ENCODE measurements at regions of chr5 and their contacts with region 1.

Region 1: DNA sequence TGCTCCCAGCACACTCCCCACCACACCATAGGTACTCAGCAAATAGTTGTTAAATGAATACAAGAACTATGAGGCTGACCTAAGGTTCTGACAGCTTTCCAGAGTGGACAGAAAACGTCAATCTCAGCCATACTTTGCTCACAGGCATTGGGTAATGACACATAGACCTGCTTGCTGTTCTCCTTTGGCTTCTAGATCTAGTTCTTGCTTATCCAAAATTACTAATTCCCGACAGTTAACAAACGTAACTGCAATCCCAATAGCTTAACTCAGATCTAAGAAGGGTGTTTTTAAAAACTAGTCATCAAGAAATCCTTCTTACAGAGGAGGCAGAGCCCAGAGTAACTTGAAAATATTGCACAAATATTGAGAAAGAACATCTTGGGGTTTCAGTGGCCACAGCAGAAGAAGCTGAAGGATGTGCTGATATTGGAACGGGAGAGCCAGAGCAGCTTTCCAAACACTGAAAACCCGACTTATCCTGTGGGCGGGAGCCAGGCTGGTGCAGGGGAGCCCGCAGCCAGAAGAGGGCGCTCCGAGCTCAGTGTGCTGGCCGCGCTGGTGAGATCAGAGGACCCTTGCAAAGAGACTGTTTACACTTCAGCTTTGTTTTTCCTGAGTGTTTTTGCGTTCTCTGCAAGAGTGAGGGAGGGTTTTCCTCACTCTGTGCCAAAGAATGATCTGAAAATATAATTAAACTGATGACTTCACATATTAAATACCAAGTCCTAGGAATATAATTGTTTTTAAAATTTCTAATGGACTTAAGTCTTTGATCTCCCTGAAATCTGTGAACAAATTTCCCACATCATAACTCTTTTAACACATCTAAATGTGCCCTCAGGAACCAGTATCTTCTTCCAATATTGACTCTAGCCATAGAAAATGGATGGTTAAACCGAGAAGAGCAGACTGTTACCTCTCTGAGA is 30.3 kb downstream of the FGF1 start:
- DNase-seq: peak; percentile 26 to 76 (median 61)
- ATAC-seq: peak; percentile 90
- H3K4me3 ChIP-seq: no peak overlapping the region
- H3K4me3 Mint-ChIP-seq: no peak overlapping the region
- H3K27ac ChIP-seq: no peak overlapping the region
- H3K27ac Mint-ChIP-seq: no peak overlapping the region
- H3K4me1 ChIP-seq: no peaks in the 10 kb centered on the region
- H3K4me1 Mint-ChIP-seq: peaks cover 0 to 9% (median 7%) of the 10 kb centered on the region in 7 donors
- H3K27me3 ChIP-seq: no peaks in the 10 kb centered on the region
- H3K27me3 Mint-ChIP-seq: peaks cover 8 to 29% (median 11%) of the 10 kb centered on the region in 5 donors

Region 2: GRCh38 chr5:141811287-141812155 is 844.1 kb before region 1 on chr5:
- CTCF ChIA-PET with region 1: no interaction called
- POLR2A ChIA-PET with region 1: no interaction called
- intact Hi-C with region 1: no loop called
- DNase-seq: peak in 5 of 9 donors; percentile 7 to 23 (median 18)
- ATAC-seq: peak; percentile 71
- H3K4me3 ChIP-seq: no peak overlapping the region
- H3K4me3 Mint-ChIP-seq: peak overlapping the region in 1 of 10 donors; percentile 25
- H3K27ac ChIP-seq: no peak overlapping the region
- H3K27ac Mint-ChIP-seq: no peak overlapping the region
- H3K4me1 ChIP-seq: no peaks in the 10 kb centered on the region
- H3K4me1 Mint-ChIP-seq: peaks cover 0 to 8% (median 0%) of the 10 kb centered on the region in 7 donors
- H3K27me3 ChIP-seq: no peaks in the 10 kb centered on the region
- H3K27me3 Mint-ChIP-seq: peaks cover 46 to 64% (median 49%) of the 10 kb centered on the region in 5 donors

Region 3: DNA sequence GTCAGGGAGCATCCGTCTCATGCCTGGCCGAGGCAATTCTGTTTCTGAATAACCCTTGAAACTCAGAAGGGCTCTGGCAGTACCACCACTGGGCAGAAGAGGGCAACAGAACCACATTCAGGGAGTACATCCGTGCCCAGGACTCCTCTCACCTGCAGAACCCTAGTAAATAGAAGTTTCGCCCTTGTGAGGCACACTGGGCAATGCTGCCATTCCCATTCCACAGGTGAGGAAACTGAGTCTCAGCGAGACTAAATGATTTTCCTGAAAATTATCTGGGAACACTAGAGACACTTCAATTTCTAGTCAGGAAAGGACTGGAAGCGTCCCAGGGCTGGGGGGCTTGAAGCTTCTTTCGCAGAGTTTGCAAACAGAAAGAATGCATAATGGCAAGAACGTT is 44.4 kb before region 1 on chr5:
- CTCF ChIA-PET with region 1: interaction called, 3 read pairs
- POLR2A ChIA-PET with region 1: no interaction called
- intact Hi-C with region 1: loop called in 1 of 2 experiments (anchors 2 kb)
- DNase-seq: peak; percentile 21 to 68 (median 54)
- ATAC-seq: peak; percentile 86
- H3K4me3 ChIP-seq: no peak overlapping the region
- H3K4me3 Mint-ChIP-seq: no peak overlapping the region
- H3K27ac ChIP-seq: no peak overlapping the region
- H3K27ac Mint-ChIP-seq: no peak overlapping the region
- H3K4me1 ChIP-seq: no peaks in the 10 kb centered on the region
- H3K4me1 Mint-ChIP-seq: peaks cover 0 to 5% (median 2%) of the 10 kb centered on the region in 7 donors
- H3K27me3 ChIP-seq: no peaks in the 10 kb centered on the region
- H3K27me3 Mint-ChIP-seq: peaks cover 3 to 22% (median 11%) of the 10 kb centered on the region in 5 donors

Region 4: DNA sequence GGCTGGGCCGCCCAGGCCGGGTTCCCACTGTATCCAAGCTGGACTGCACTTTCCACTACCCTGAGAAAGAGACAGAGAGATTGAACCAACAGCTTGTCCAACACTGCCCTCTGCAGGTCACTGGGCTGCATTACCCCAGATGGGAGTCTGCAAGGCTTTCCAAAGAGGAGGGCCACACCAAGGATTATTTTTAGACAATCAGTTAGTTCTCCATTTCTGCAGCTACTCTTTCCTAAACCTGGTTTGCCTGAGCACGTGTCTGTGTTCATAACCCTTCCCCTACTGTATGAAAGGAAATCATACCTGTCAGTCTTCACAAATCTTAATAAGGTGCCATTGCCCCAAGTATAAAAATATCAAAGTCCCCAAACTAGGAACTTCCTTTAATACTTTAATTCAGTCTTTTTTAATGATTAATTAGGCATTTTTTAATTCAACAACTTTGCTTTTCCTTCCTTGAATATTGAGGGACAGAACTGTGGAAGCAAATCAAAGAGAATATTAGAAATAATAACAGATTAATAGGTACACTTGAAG is 43.6 kb after region 1 on chr5:
- CTCF ChIA-PET with region 1: interaction called, 6 read pairs
- POLR2A ChIA-PET with region 1: interaction called, 3 read pairs
- intact Hi-C with region 1: loop called (anchors 1 kb)
- DNase-seq: peak; percentile 53 to 79 (median 68)
- ATAC-seq: peak; percentile 95
- H3K4me3 ChIP-seq: no peak overlapping the region
- H3K4me3 Mint-ChIP-seq: no peak overlapping the region
- H3K27ac ChIP-seq: no peak overlapping the region
- H3K27ac Mint-ChIP-seq: no peak overlapping the region
- H3K4me1 ChIP-seq: no peaks in the 10 kb centered on the region
- H3K4me1 Mint-ChIP-seq: peaks cover 0 to 10% (median 2%) of the 10 kb centered on the region in 7 donors
- H3K27me3 ChIP-seq: no peaks in the 10 kb centered on the region
- H3K27me3 Mint-ChIP-seq: peaks cover 0 to 19% (median 5%) of the 10 kb centered on the region in 5 donors

Region 5: GRCh38 chr5:142874537-142874936 is 218.9 kb after region 1 on chr5:
- CTCF ChIA-PET with region 1: interaction called, 6 read pairs
- POLR2A ChIA-PET with region 1: no interaction called
- intact Hi-C with region 1: loop called in 1 of 2 experiments (anchors 5 kb)
- DNase-seq: no peak
- ATAC-seq: no peak
- H3K4me3 ChIP-seq: no peak overlapping the region
- H3K4me3 Mint-ChIP-seq: no peak overlapping the region
- H3K27ac ChIP-seq: no peak overlapping the region
- H3K27ac Mint-ChIP-seq: no peak overlapping the region
- H3K4me1 ChIP-seq: no peaks in the 10 kb centered on the region
- H3K4me1 Mint-ChIP-seq: peaks cover 2 to 12% (median 4%) of the 10 kb centered on the region in 7 donors
- H3K27me3 ChIP-seq: no peaks in the 10 kb centered on the region
- H3K27me3 Mint-ChIP-seq: no peaks in the 10 kb centered on the region

Region 6: DNA sequence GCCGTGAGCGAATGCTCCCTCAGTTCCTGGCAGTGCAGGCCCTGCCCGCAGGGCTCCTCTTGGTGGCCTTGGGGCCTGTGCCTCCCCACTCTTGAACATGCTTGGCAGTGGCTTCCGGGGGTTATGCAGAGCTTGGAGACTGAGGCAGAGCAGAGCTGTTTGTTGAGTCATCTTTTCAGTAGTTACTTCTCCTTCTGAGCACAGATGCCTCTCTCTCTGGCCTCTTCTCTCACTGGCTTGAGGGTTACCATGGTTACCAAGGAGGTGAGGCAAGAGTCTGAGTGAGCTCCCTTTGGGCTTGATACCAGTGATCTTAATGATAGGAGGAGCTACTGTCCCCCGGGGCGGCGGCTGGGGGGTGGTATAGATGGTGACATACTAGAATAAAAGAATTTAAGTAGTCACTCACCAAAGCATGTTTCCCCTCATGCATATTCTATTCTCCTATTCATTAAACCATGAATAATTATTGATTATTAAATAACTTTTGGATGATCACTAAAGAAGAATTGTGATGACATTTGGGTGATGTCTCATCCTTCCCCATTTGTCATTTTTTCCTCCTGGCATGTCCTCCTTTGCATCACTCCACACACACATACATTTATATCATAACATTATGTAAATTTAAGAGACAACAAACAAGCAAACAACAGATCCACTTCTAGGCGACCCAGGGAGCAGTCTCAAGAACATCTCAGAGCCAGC is 225.6 kb after region 1 on chr5:
- CTCF ChIA-PET with region 1: interaction called, 6 read pairs
- POLR2A ChIA-PET with region 1: no interaction called
- intact Hi-C with region 1: loop called (anchors 2 kb)
- DNase-seq: no peak
- ATAC-seq: peak; percentile 84
- H3K4me3 ChIP-seq: no peak overlapping the region
- H3K4me3 Mint-ChIP-seq: no peak overlapping the region
- H3K27ac ChIP-seq: no peak overlapping the region
- H3K27ac Mint-ChIP-seq: no peak overlapping the region
- H3K4me1 ChIP-seq: peaks cover 0 to 3% of the 10 kb centered on the region in 2 donors
- H3K4me1 Mint-ChIP-seq: peaks cover 0 to 11% (median 5%) of the 10 kb centered on the region in 7 donors
- H3K27me3 ChIP-seq: no peaks in the 10 kb centered on the region
- H3K27me3 Mint-ChIP-seq: no peaks in the 10 kb centered on the region

Region 7: GRCh38 chr5:142888469-142889085 is 233.0 kb after region 1 on chr5:
- CTCF ChIA-PET with region 1: interaction called, 3 read pairs
- POLR2A ChIA-PET with region 1: no interaction called
- intact Hi-C with region 1: loop called in 1 of 2 experiments (anchors 1 kb)
- DNase-seq: peak in 4 of 9 donors; percentile 19 to 27 (median 24)
- ATAC-seq: peak; percentile 45
- H3K4me3 ChIP-seq: no peak overlapping the region
- H3K4me3 Mint-ChIP-seq: no peak overlapping the region
- H3K27ac ChIP-seq: no peak overlapping the region
- H3K27ac Mint-ChIP-seq: no peak overlapping the region
- H3K4me1 ChIP-seq: peaks cover 0 to 8% of the 10 kb centered on the region in 2 donors
- H3K4me1 Mint-ChIP-seq: peaks cover 0 to 16% (median 5%) of the 10 kb centered on the region in 7 donors
- H3K27me3 ChIP-seq: no peaks in the 10 kb centered on the region
- H3K27me3 Mint-ChIP-seq: no peaks in the 10 kb centered on the region

Region 8: GRCh38 chr5:143413958-143414669 is 758.5 kb after region 1 on chr5:
- CTCF ChIA-PET with region 1: no interaction called
- POLR2A ChIA-PET with region 1: no interaction called
- intact Hi-C with region 1: no loop called
- DNase-seq: no peak
- ATAC-seq: no peak
- H3K4me3 ChIP-seq: no peak overlapping the region
- H3K4me3 Mint-ChIP-seq: no peak overlapping the region
- H3K27ac ChIP-seq: no peak overlapping the region
- H3K27ac Mint-ChIP-seq: no peak overlapping the region
- H3K4me1 ChIP-seq: peaks cover 0 to 15% of the 10 kb centered on the region in 2 donors
- H3K4me1 Mint-ChIP-seq: peaks cover 0 to 20% (median 5%) of the 10 kb centered on the region in 7 donors
- H3K27me3 ChIP-seq: no peaks in the 10 kb centered on the region
- H3K27me3 Mint-ChIP-seq: no peaks in the 10 kb centered on the region

Region 9: DNA sequence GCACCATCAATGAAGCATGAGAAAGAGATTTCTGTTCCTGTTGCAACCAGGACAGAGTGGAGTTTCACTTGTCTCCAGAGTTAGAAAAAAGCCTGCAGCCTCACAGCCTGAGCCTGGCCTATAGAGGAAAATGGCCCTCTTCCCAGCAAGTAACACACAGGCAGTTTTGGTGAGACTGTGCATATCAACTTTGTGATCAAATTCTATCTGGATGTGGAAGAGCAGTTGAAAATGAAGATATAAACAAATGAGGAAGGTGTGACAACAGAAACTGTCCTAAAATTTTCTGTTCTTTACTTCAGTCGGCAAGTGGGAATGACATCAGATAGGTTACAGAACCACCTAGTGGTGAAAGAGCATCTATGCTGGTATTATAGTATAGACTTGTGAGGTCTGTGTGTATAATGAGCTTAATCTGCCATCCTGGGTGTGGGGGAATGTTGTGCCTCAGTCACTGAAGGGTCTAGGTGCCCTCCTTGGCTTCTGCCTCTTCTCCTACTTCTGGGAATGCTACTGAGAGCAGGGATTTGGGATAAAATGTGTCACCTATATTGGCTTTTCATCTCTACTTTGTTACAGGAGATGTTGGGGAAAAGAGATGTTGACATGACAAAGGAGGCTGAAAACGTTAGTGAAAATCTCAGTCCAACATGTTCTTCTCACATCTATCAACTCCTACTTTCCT is 1486.7 kb after region 1 on chr5:
- CTCF ChIA-PET with region 1: no interaction called
- POLR2A ChIA-PET with region 1: no interaction called
- intact Hi-C with region 1: no loop called
- DNase-seq: peak in 5 of 9 donors; percentile 13 to 32 (median 23)
- ATAC-seq: peak; percentile 88
- H3K4me3 ChIP-seq: no peak overlapping the region
- H3K4me3 Mint-ChIP-seq: peak overlapping the region in 2 of 10 donors; percentile 3 to 47
- H3K27ac ChIP-seq: no peak overlapping the region
- H3K27ac Mint-ChIP-seq: no peak overlapping the region
- H3K4me1 ChIP-seq: no peaks in the 10 kb centered on the region
- H3K4me1 Mint-ChIP-seq: peaks cover 0 to 8% (median 0%) of the 10 kb centered on the region in 7 donors
- H3K27me3 ChIP-seq: no peaks in the 10 kb centered on the region
- H3K27me3 Mint-ChIP-seq: peaks cover 0 to 24% (median 16%) of the 10 kb centered on the region in 5 donors